PC-9 (cell line): ENCODE measurements at regions of chr11 and their contacts with region 1.

Region 1: DNA sequence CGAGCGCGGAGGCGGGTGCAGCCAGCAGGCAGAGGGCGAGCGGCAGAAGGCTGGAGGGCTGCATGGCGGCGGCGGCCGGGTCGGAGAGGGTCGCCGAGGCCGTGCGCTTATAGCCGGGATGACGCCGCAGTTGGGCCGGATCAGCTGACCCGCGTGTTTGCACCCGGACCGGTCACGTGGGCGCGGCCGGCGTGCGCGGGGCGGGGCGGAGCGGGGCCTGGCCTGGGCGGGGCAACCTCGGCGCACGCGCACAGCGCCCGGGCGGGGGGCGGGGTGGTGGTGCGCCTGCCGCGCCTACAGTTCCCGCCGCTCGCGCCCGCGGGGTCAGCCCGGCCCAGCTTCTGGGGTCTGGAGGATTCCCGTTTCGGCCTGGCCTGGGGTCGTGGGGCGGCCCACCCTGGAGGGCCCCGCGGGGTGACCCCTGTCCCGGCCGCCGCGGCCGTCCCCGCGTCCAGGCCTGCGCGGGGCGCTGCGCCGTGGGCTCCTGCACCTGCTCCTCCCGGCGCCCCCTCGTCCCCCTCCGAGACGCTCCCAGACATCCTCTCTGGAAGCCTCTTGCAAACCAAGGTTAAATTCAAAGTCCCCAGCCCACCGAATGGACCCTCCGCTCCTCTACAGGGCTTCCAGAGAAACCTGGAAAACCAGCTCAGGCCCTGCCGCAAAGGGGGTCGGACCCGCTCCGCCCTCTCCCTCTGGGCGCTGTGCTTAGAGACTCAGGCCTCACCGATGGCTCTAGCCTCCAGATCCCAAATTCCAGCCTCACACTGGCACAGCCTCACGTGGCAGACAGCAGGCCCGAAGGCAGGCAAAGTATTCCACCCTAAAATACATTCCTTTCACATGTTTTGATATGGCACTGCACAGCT is at the start of gene CTSD:
- DNase-seq: peak in 1 of 2 experiments; percentile 83
- H3K4me3 ChIP-seq: peak within 1 kb of the TSS; percentile 66
- H3K27ac ChIP-seq: peak within 1 kb of the TSS; percentile 80
- H3K4me1 ChIP-seq: peaks cover 31% of the 10 kb centered on the region
- H3K27me3 ChIP-seq: no peaks in the 10 kb centered on the region
- CTCF ChIP-seq: no peak
- total RNA-seq, gene CTSD: 735 and 993 TPM in 2 replicates

Region 2: GRCh38 chr11:1659506-1659905 is 104.5 kb before region 1 on chr11:
- CTCF ChIA-PET with region 1: no interaction called
- POLR2A ChIA-PET with region 1: no interaction called
- intact Hi-C with region 1: no loop called
- DNase-seq: no peak
- H3K4me3 ChIP-seq: no peak overlapping the region
- H3K27ac ChIP-seq: no peak overlapping the region
- H3K4me1 ChIP-seq: no peaks in the 10 kb centered on the region
- H3K27me3 ChIP-seq: peaks cover 48% of the 10 kb centered on the region
- CTCF ChIP-seq: no peak

Region 3: GRCh38 chr11:1694064-1694845 is 69.8 kb before region 1 on chr11:
- CTCF ChIA-PET with region 1: interaction called, 9 read pairs
- POLR2A ChIA-PET with region 1: no interaction called
- intact Hi-C with region 1: loop called (anchors 2 kb)
- DNase-seq: peak; percentile 45 to 75
- H3K4me3 ChIP-seq: no peak overlapping the region; the same call in 1 of the 2 replicates
- H3K27ac ChIP-seq: no peak overlapping the region
- H3K4me1 ChIP-seq: peaks cover 11% of the 10 kb centered on the region
- H3K27me3 ChIP-seq: peaks cover 7% of the 10 kb centered on the region; the same call in 1 of the 2 replicates
- CTCF ChIP-seq: peak; percentile 85

Region 4: DNA sequence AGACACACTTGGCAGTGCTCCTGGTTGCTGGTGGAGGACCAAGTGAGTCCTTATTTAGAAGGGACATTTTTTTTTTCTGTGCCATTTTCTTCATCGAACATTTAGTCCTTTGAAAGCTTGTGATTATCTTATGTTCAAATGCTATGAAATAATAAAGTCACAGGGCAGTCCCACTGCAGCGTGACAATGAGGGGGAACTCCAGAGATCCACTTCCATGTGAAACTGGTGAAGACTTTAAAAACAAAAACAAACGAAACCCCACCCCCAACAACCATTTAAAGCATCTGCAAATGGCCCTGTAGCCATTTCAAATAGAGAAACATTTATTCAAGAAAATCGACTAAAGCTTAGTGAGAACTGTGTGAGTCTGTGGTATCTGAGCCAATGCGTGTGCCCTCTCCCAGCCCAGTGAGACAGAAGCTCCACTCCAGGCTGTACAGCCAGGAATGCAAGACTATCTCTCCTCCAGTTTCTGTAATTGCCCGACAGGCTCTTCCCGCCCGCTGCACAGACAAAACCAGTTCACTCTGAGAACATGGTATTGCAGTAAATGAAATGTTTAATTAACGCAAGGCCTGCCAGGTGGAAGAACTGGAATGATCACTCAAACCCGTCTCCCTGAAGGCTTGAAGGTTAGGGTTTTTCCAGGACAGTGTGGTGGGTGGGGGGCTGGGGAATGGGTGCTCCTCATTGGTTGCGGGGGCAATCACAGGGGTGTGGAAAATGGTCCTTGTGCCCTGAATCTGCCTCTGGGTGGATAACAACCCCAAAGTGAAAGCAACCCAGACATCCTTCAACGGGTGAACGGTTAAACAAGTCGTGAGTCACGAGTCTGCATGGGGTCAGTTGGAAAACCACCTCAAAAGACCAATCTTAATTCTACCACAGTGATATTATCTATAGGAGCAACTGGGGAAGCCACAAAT is 58.6 kb before region 1 on chr11:
- CTCF ChIA-PET with region 1: no interaction called
- POLR2A ChIA-PET with region 1: no interaction called
- intact Hi-C with region 1: loop called (anchors 1 kb)
- DNase-seq: peak; percentile 53 to 87
- H3K4me3 ChIP-seq: peak overlapping the region; percentile 51; the same call in 1 of the 2 replicates
- H3K27ac ChIP-seq: peak overlapping the region; percentile 76
- H3K4me1 ChIP-seq: peaks cover 27% of the 10 kb centered on the region
- H3K27me3 ChIP-seq: no peaks in the 10 kb centered on the region
- CTCF ChIP-seq: no peak

Region 5: GRCh38 chr11:1782831-1783724 is 19.0 kb after region 1 on chr11:
- CTCF ChIA-PET with region 1: interaction called, 3 read pairs
- POLR2A ChIA-PET with region 1: interaction called, 12 read pairs
- intact Hi-C with region 1: no loop called
- DNase-seq: peak in 1 of 2 experiments; percentile 62
- H3K4me3 ChIP-seq: peak overlapping the region; percentile 24; the same call in 1 of the 2 replicates
- H3K27ac ChIP-seq: peak overlapping the region; percentile 54
- H3K4me1 ChIP-seq: peaks cover 35% of the 10 kb centered on the region
- H3K27me3 ChIP-seq: no peaks in the 10 kb centered on the region
- CTCF ChIP-seq: no peak

Region 6: GRCh38 chr11:1796413-1797011 is 32.5 kb after region 1 on chr11:
- CTCF ChIA-PET with region 1: no interaction called
- POLR2A ChIA-PET with region 1: no interaction called
- intact Hi-C with region 1: loop called (anchors 1 kb)
- DNase-seq: peak; percentile 34 to 44
- H3K4me3 ChIP-seq: no peak overlapping the region
- H3K27ac ChIP-seq: no peak overlapping the region
- H3K4me1 ChIP-seq: peaks cover 8% of the 10 kb centered on the region; the same call in 1 of the 2 replicates
- H3K27me3 ChIP-seq: no peaks in the 10 kb centered on the region
- CTCF ChIP-seq: peak; percentile 27; the same call in 1 of the 2 replicates

Region 7: GRCh38 chr11:1827095-1827813 is 63.2 kb after region 1 on chr11:
- CTCF ChIA-PET with region 1: interaction called, 6 read pairs
- POLR2A ChIA-PET with region 1: interaction called, 3 read pairs
- intact Hi-C with region 1: loop called (anchors 1 kb)
- DNase-seq: peak; percentile 76 to 78
- H3K4me3 ChIP-seq: no peak overlapping the region
- H3K27ac ChIP-seq: no peak overlapping the region
- H3K4me1 ChIP-seq: peaks cover 54% of the 10 kb centered on the region
- H3K27me3 ChIP-seq: no peaks in the 10 kb centered on the region
- CTCF ChIP-seq: no peak; the same call in 1 of the 2 replicates

Region 8: DNA sequence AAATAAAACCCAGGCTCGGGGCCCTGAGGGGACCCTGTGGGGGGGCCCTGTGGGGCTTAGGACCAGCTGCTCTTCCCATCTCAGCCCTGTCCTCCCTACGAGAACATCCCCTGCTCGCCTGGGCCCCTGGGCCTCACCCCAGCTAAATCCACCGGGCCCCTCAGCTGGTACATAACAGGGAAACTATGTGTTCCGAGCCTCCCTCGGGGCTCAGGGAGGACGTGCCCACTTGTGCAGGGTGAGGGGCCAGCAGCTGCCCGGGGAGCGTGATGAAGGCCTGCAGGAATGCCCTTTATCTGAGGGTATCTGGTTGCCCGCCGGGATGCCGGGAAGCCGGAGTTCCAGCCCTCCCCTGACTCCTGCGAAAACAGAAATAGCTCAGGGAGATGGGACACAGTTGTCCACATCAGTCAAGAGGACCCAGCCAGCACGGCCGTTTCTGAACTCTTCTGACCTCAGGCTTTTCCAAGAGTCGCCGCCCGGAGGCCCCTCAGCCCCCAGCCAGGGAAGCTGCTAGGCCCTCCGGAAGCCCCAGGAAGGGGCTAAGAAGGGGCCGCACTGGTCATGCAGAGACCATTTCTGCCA is 203.7 kb after region 1 on chr11:
- CTCF ChIA-PET with region 1: interaction called, 14 read pairs
- POLR2A ChIA-PET with region 1: no interaction called
- intact Hi-C with region 1: no loop called
- DNase-seq: no peak
- H3K4me3 ChIP-seq: no peak overlapping the region
- H3K27ac ChIP-seq: no peak overlapping the region
- H3K4me1 ChIP-seq: no peaks in the 10 kb centered on the region
- H3K27me3 ChIP-seq: no peaks in the 10 kb centered on the region
- CTCF ChIP-seq: no peak